HAP-1 (cell line): ENCODE measurements at regions of chr11 and their contacts with region 1.

Region 1: GRCh38 chr11:76734456-76735420 is 48.4 kb upstream of the TSKU start:
- DNase-seq: no peak
- H3K4me3 ChIP-seq: no peak overlapping the region
- H3K4me1 ChIP-seq: no peaks in the 10 kb centered on the region
- H3K27me3 ChIP-seq: no peaks in the 10 kb centered on the region

Region 2: DNA sequence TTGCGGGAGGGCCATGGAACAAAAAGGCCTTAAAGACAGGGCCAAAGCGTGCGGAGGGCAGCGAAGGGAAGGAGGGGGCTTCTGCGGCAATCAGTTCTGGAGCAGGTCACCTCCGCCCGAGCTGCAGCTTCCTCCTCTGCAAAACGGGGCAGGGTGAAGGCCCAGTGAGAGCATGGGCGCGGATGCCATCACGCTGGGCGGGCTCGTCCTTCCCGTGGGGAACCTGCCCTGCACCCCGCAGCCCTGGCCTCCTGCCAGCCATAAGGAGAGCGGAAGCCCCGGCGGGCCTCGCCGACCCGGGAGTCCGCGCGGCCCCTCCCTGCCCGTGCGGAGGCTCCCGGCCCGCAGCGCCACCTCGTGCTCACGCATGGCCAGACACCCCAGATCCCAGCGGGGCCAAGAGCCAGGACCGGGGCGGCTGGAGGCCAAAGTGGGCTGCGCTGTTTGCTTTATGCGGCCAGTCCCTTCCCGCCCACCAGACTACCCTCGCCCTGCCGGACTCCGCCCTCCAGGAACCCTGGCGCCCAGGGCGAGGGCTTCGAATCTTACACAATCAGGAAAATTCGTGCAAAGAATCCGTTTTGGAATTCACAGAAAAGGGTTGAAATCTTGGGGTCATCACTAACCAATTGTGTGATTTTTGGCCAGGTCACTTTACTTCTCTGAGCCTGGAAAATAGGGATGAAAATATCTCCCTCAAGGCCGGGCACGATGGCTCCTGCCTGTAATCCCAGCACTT is 64.5 kb after region 1 on chr11:
- in situ Hi-C with region 1: loop called (anchors 5 kb)
- DNase-seq: peak; percentile 55 to 91
- H3K4me3 ChIP-seq: peak overlapping the region; percentile 22
- H3K4me1 ChIP-seq: peaks cover 10% of the 10 kb centered on the region
- H3K27me3 ChIP-seq: no peaks in the 10 kb centered on the region

Region 3: DNA sequence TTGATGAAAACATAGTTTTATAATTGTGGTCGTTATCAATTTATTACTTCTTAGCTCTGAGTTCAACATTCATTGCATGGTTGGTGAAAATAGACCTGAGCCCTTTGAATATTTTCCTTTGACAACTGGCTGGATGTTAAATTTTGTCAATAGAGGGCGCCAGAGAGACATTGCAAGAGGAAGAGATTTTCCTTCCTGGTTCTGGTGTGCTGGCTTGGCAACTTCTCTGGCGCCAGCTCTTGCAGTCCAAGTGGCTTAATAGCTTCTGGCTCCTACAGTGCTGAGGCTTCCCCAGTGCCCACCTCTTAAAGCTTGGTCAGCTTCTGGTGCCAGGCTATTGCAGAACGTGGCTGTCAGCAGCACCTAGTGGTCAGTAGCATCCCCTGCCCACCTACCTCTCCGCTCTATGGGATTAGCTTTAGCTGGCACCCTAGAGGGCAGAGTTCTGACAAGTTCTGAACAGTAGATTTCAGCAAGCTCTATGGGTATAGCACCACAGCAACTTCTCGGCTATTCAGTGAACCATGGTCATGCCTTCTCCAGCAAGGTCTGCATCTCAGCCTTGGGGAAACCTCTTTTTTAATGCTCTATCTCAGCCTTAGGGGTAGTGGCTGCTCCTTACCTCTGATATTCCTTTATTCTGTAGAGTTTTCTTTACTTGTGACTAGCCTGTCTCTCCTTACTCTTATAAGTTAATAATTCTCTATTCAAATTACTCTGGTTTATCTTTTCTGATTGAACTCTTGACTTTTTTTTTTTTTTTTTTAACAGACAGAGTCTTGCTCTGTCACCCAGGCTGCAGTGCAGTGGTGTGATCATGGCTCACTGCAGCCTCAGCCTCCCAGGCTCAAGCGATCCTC is 185.4 kb after region 1 on chr11:
- in situ Hi-C with region 1: loop called (anchors 10 kb)
- DNase-seq: peak; percentile 72 to 84
- H3K4me3 ChIP-seq: no peak overlapping the region
- H3K4me1 ChIP-seq: no peaks in the 10 kb centered on the region
- H3K27me3 ChIP-seq: no peaks in the 10 kb centered on the region